Breast epithelium (tissue), 4 donors: ENCODE measurements at regions of chr1 and their contacts with region 1.

Region 1: GRCh38 chr1:162854245-162854882 is 6.6 kb downstream of the CCDC190 start:
- DNase-seq: peak; percentile 20 to 55
- H3K4me3 ChIP-seq: no peak overlapping the region
- H3K27ac ChIP-seq: no peak overlapping the region
- H3K4me1 ChIP-seq: no peaks in the 10 kb centered on the region
- H3K27me3 ChIP-seq: no peaks in the 10 kb centered on the region
- CTCF ChIP-seq: peak in 2 of 3 donors; percentile 50 to 59
- POLR2A ChIP-seq: no peak

Region 2: DNA sequence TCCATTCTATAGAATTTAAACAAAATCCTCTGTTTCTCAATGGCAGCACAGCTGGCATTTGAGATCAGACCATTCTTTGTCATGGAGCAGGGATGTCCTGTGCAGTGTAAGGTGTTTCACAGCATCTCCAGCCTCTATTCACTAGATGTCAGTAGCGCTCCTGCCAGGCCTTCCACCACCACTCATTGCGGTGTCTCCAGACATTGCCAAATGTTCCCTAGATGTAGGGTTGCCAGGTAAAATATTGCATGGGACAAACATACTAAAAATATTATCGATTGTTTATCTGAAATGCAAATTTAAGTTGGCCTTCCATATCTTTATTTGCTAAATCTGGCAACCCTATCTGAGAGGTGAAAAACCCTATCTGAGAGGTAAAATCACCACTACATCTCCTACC is 1911.4 kb before region 1 on chr1:
- intact Hi-C with region 1: no loop called
- DNase-seq: no peak
- H3K4me3 ChIP-seq: no peak overlapping the region
- H3K27ac ChIP-seq: no peak overlapping the region
- H3K4me1 ChIP-seq: no peaks in the 10 kb centered on the region
- H3K27me3 ChIP-seq: peaks cover 0 to 16% of the 10 kb centered on the region in 2 donors
- CTCF ChIP-seq: no peak
- POLR2A ChIP-seq: no peak

Region 3: GRCh38 chr1:162627662-162628296 is 226.6 kb before region 1 on chr1:
- intact Hi-C with region 1: loop called (anchors 5 kb)
- DNase-seq: no peak
- H3K4me3 ChIP-seq: no peak overlapping the region
- H3K27ac ChIP-seq: no peak overlapping the region
- H3K4me1 ChIP-seq: no peaks in the 10 kb centered on the region
- H3K27me3 ChIP-seq: no peaks in the 10 kb centered on the region
- CTCF ChIP-seq: peak in 2 of 3 donors; percentile 20 to 27
- POLR2A ChIP-seq: no peak

Region 4: DNA sequence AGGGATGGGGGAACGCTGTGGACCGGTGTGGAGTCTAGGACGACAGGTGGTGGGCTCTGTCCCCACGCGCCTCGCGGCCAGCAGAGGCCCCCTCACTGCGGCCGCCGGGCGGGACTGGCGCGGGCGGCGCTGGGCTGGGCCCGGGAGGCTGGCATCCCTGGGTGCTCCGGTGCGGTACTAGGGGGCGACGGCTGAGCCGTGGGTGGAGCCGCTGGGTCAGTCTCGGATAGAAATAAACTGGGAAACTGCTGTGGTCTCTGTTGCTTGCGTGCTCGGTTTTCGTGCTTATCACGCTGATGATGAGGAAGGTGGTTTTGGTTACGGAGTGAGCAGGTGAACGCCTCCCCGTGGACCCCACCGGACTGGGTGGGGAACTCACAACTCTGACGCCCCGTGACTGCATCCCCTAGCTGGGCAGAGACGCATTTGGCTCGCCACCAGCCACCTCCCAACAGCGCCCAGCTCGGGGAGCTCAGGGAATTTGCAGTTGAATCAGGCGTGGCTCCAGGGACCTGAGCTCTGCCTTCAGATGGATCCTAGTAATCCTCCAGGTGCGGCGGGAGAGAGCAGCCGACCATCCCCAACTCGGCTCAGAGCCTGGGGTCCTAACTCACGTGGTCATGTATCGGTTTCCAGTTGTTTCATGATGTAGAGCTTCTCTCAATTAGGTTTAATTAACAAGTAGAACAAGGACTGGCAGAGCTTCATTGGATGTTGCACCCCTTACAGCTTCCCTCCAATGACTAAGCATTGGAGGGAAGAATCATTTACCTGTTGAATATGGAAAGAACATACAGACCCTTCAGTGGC is 31.8 kb before region 1 on chr1:
- intact Hi-C with region 1: no loop called
- DNase-seq: peak in 1 of 2 donors; percentile 52
- H3K4me3 ChIP-seq: peak overlapping the region; percentile 28 to 67 (median 45)
- H3K27ac ChIP-seq: no peak overlapping the region
- H3K4me1 ChIP-seq: peaks cover 0 to 5% of the 10 kb centered on the region in 2 donors
- H3K27me3 ChIP-seq: peaks cover 0 to 4% of the 10 kb centered on the region in 2 donors
- CTCF ChIP-seq: no peak
- POLR2A ChIP-seq: no peak